ENCODE measurements at regions of chr9 and their contacts with region 1.

Region 1: GRCh38 chr9:115757461-115757860 is 396.1 kb upstream of the PAPPA start:
- DNase-seq: no peak
- H3K4me3 Mint-ChIP-seq: no peak overlapping the region
- H3K27ac Mint-ChIP-seq: no peak overlapping the region
- H3K4me1 Mint-ChIP-seq: no peaks in the 10 kb centered on the region
- H3K27me3 Mint-ChIP-seq: peaks cover 2% of the 10 kb centered on the region

Region 2: GRCh38 chr9:115740986-115741385 is 16.5 kb before region 1 on chr9:
- intact Hi-C with region 1: loop called (anchors 2 kb)
- DNase-seq: no peak
- H3K4me3 Mint-ChIP-seq: no peak overlapping the region
- H3K27ac Mint-ChIP-seq: no peak overlapping the region
- H3K4me1 Mint-ChIP-seq: no peaks in the 10 kb centered on the region
- H3K27me3 Mint-ChIP-seq: no peaks in the 10 kb centered on the region

Measured in activated T-helper 1 cell treated with anti-CD3 and anti-CD28 coated beads, Interleukin-12 subunit alpha, Interleukin-12 subunit beta, Interleukin-2, Interleukin-4 antibody, amounts not matched to agents 30 ng/mL and 10 ng/mL and 1 ng/mL, durations not matched to agents 14 hours and 24 hours and 36 hours (primary cell).